Mammary epithelial cell (primary cell): ENCODE measurements at regions of chr4 and their contacts with region 1.

Region 1: DNA sequence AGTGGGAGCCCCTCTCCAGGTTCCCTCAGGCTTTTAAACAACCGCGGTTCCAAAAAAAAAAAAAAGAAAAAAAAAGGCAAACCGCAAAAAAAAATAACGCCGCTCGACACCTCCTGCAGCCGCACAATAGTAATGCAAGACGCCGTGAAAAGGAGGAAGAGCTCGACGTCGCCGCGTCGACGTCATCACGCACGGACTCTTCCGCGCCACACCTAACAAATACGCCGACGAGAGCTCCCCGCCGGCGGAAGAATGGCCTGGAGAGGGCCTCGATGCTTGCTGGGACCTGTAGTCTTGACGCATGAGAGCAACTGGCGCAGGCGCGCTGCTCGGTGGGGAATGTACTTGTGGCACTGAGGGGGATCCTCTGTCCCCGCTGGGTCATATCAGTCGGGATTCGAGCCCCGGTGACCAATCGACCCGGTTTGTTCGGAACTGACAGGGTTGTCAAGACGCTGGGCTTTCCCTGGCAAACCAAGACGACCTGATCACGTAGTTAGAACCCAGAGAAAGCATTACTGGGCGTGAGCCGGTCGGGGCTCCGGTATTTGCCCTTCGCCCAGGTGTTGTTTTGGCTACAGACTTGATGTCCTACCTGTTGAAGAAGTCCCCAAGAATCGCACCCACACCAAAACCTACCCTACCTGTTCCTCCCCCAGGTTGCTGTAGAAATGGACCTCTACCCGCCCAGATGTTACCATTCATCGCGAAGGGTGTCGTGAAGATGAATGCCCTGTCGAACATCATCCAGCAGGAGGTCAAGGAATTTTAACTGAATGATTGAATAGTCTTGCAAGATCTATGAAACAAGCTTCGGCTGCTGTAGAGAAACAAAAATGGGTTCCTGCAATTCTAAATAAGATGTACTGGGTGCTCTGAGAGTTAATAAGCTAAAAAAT is at the start of gene CBR4:
- DNase-seq: peak; percentile 98
- H3K4me3 ChIP-seq: peak within 1 kb of the TSS; percentile 67 to 79 (median 78)
- H3K27ac ChIP-seq: peak within 1 kb of the TSS; percentile 93
- H3K4me1 ChIP-seq: peaks cover 28% of the 10 kb centered on the region
- H3K27me3 ChIP-seq: no peaks in the 10 kb centered on the region
- CTCF ChIP-seq: peak; percentile 15 to 43
- total RNA-seq, gene CBR4: 19.0 to 24.4 TPM

Region 2: GRCh38 chr4:168710353-168710946 is 299.9 kb before region 1 on chr4:
- CTCF ChIA-PET with region 1: no interaction called
- dilution Hi-C with region 1: no loop called
- in situ Hi-C with region 1: no loop called
- intact Hi-C with region 1: loop called (anchors 5 kb)
- DNase-seq: peak; percentile 54
- H3K4me3 ChIP-seq: no peak overlapping the region
- H3K27ac ChIP-seq: no peak overlapping the region
- H3K4me1 ChIP-seq: peaks cover 33% of the 10 kb centered on the region
- H3K27me3 ChIP-seq: no peaks in the 10 kb centered on the region
- CTCF ChIP-seq: peak; percentile 49 to 74

Region 3: DNA sequence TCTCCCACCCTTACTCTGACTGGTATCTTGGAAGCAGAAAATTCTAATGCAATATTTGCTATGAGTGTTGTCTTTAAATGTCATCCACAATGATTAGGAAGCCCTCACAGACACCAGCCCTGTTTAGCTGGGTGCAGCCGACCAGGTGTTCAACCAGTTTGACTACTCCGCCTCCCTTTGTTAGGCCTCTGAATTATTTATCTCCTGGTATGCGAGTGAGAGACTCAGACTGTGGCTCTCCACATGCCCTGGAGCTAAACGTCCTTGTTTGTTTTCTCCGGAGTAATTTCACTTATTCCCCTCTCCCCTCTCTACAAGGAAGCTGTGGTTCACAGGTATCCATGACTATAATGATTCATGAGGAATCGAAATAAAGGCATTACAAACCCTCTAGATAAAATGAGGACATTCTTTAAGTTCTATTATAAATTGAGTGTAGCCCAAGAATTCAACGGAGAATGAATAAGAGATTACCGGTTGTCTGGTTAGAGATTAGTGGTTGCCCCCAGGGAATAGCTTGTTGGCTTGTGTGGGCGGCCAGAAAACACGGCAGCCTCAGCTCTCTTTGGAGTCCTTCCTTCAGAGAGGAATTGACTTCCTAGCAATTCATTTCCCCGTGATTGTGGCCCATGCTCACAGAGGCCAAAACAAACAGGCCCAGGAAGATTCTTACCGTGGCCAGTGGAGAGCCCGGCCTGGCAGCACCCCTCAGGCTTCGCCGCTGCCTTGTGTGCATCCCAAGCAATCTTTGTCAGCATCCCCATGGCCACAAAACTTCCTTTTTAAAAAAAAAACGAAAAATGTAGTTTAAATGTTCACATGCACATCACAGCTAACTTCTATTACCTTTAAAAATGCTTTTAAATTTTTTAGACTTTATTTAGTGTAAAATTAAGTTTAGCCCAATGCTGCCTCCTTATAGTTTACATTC is 59.9 kb after region 1 on chr4:
- CTCF ChIA-PET with region 1: interaction called, 5 read pairs
- dilution Hi-C with region 1: no loop called
- in situ Hi-C with region 1: no loop called
- intact Hi-C with region 1: loop called (anchors 2 kb)
- DNase-seq: peak; percentile 99
- H3K4me3 ChIP-seq: peak overlapping the region; percentile 11 to 18 (median 12)
- H3K27ac ChIP-seq: peak overlapping the region; percentile 94
- H3K4me1 ChIP-seq: peaks cover 41% of the 10 kb centered on the region
- H3K27me3 ChIP-seq: no peaks in the 10 kb centered on the region
- CTCF ChIP-seq: no peak

Region 4: GRCh38 chr4:169404960-169405359 is 394.6 kb after region 1 on chr4:
- CTCF ChIA-PET with region 1: interaction called, 14 read pairs
- dilution Hi-C with region 1: no loop called
- in situ Hi-C with region 1: no loop called
- intact Hi-C with region 1: no loop called
- DNase-seq: peak; percentile 75
- H3K4me3 ChIP-seq: no peak overlapping the region
- H3K27ac ChIP-seq: no peak overlapping the region
- H3K4me1 ChIP-seq: peaks cover 2% of the 10 kb centered on the region
- H3K27me3 ChIP-seq: no peaks in the 10 kb centered on the region
- CTCF ChIP-seq: no peak